ENCODE measurements at regions of chr16 and their contacts with region 1.

Region 1: DNA sequence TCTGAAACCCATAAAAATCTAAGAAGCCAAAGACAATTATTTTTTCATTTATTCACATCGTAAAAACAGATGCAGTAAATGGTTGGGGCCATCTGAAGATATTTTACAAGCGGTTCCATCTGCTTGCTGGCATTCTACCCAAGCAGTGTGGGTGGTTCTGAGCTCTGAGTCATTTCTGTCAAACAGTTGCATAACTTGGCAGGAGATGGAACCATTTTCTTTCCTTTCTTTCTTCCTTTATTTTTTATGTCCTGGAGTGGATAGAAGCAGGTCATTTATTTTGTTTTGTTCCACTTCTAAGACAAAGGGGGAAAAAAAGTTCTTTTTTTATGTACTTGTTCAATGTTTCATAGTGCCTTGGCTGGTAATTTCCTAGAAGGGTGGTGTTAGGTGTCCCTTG is 1151.9 kb upstream of the GOT2 start:
- DNase-seq: no peak
- ATAC-seq: no peak
- H3K4me3 ChIP-seq: no peak overlapping the region
- H3K4me3 Mint-ChIP-seq: no peak overlapping the region
- H3K27ac ChIP-seq: no peak overlapping the region
- H3K27ac Mint-ChIP-seq: no peak overlapping the region
- H3K4me1 ChIP-seq: no peaks in the 10 kb centered on the region
- H3K4me1 Mint-ChIP-seq: no peaks in the 10 kb centered on the region
- H3K27me3 ChIP-seq: no peaks in the 10 kb centered on the region
- H3K27me3 Mint-ChIP-seq: no peaks in the 10 kb centered on the region
- CTCF ChIP-seq: no peak

Region 2: GRCh38 chr16:59864981-59865666 is 20.9 kb before region 1 on chr16:
- intact Hi-C with region 1: no loop called
- DNase-seq: no peak
- ATAC-seq: no peak
- H3K4me3 ChIP-seq: no peak overlapping the region
- H3K4me3 Mint-ChIP-seq: no peak overlapping the region
- H3K27ac ChIP-seq: no peak overlapping the region
- H3K27ac Mint-ChIP-seq: no peak overlapping the region
- H3K4me1 ChIP-seq: no peaks in the 10 kb centered on the region
- H3K4me1 Mint-ChIP-seq: no peaks in the 10 kb centered on the region
- H3K27me3 ChIP-seq: no peaks in the 10 kb centered on the region
- H3K27me3 Mint-ChIP-seq: no peaks in the 10 kb centered on the region
- CTCF ChIP-seq: no peak

Region 3: DNA sequence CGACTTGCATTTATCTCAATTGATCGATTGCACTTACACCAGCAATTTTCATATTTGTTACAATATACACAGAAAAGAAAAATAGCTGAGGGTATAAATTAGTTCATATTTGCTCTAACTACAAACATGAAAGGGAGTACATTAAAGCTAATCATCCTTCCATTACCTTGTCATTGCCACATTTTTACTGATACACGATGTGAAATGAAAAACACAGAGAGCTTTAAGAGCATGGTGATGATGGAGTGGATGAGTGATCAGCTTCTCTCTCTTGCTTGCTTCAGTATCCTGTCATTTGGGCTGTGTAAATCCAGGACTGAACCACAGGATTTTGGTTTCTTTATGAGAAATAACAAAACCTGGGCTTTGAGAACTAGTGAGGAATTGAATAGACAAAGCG is 55.6 kb after region 1 on chr16:
- intact Hi-C with region 1: loop called (anchors 10 kb)
- DNase-seq: no peak
- ATAC-seq: no peak
- H3K4me3 ChIP-seq: no peak overlapping the region
- H3K4me3 Mint-ChIP-seq: no peak overlapping the region
- H3K27ac ChIP-seq: no peak overlapping the region
- H3K27ac Mint-ChIP-seq: no peak overlapping the region
- H3K4me1 ChIP-seq: no peaks in the 10 kb centered on the region
- H3K4me1 Mint-ChIP-seq: no peaks in the 10 kb centered on the region
- H3K27me3 ChIP-seq: no peaks in the 10 kb centered on the region
- H3K27me3 Mint-ChIP-seq: no peaks in the 10 kb centered on the region
- CTCF ChIP-seq: no peak

Measured in natural killer cell (primary cell).